ENCODE measurements at regions of chr6 and their contacts with region 1.

Region 1: GRCh38 chr6:137707590-137708360 is 159.3 kb upstream of the TNFAIP3 start:
- DNase-seq: peak; percentile 55
- ATAC-seq: peak; percentile 64 to 70

Region 2: DNA sequence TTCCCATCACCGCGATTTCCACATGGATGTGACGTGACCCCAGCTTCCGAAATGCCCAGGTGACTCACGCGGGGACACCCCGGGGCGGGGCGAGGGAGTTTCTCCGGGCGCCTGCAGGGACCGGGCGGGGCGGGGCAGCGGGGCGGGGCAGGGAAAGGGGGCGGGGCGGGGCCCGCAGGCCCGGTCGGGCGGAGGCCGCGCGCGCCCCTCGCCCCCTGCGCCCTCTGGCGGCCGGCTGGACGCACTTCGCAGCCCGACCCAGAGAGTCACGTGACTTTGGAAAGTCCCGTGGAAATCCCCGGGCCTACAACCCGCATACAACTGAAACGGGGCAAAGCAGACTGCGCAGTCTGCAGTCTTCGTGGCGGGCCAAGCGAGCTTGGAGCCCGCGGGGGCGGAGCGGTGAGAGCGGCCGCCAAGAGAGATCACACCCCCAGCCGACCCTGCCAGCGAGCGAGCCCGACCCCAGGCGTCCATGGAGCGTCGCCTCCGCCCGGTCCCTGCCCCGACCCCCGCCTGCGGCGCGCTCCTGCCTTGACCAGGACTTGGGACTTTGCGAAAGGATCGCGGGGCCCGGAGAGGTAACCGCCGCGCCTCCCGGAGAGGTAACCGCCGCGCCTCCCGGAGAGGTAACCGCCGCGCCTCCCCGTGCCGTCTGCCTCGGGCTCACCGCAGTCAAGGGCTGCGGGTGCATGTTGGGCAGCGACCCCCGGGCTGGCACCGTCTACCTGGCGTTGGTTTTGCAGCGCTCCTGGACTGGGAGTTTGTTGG is 159.3 kb after region 1 on chr6 and contains the start of gene TNFAIP3:
- intact Hi-C with region 1: loop called (anchors 2 to 5 kb)
- DNase-seq: peak; percentile 95
- ATAC-seq: peak; percentile 93 to 95
- total RNA-seq, gene TNFAIP3: 10.9 to 13.6 TPM

Region 3: GRCh38 chr6:137944793-137945498 is 237.2 kb after region 1 on chr6:
- intact Hi-C with region 1: loop called (anchors 2 to 5 kb)
- DNase-seq: no peak
- ATAC-seq: peak; percentile 85 to 88

Region 4: DNA sequence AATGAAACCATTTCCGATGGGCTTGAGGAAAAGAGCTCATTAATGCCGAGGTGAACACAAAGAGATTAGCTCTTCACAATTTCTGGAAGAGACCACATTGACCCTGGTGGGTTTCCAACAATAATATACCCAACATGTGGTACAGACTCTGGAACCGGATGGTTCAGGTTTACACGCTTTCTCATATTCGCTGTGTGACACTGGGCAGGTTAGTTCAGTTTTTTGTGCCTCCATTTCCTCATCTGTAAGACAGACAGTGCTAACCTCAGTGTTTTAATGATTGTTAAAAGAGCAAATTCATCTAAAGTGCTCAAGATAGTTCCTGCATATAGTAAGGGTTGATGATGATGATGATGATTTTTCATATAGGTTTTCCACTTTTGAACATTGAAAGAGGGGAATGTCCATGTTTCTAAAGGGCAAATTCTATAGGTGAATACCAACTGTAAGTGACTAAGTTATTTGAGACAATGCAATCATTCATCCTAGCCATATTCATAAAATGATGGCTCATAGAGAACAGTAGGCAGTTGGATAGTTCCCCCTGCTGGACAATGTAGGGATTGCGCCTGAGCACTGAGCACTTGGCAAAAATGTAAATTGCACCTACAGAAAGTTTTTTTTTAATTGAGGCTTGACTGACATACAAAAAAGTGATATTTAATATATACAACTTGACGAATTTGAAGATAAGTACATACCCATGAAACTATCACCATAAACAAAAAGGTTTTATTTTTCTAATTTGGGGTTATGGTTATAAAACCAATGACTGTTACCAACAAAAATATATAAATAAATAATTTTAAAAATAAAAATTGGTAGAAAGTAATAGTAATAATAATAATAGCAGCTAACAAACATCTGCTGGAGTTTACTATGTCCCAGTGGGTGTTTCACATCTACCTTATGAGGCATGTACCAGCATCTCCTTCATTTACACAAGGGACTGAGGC is 401.5 kb after region 1 on chr6:
- intact Hi-C with region 1: loop called in 1 of 2 experiments (anchors 10 kb)
- DNase-seq: peak; percentile 58
- ATAC-seq: no peak